IMR-90 (cell line): ENCODE measurements at regions of chr11 and their contacts with region 1.

Region 1: DNA sequence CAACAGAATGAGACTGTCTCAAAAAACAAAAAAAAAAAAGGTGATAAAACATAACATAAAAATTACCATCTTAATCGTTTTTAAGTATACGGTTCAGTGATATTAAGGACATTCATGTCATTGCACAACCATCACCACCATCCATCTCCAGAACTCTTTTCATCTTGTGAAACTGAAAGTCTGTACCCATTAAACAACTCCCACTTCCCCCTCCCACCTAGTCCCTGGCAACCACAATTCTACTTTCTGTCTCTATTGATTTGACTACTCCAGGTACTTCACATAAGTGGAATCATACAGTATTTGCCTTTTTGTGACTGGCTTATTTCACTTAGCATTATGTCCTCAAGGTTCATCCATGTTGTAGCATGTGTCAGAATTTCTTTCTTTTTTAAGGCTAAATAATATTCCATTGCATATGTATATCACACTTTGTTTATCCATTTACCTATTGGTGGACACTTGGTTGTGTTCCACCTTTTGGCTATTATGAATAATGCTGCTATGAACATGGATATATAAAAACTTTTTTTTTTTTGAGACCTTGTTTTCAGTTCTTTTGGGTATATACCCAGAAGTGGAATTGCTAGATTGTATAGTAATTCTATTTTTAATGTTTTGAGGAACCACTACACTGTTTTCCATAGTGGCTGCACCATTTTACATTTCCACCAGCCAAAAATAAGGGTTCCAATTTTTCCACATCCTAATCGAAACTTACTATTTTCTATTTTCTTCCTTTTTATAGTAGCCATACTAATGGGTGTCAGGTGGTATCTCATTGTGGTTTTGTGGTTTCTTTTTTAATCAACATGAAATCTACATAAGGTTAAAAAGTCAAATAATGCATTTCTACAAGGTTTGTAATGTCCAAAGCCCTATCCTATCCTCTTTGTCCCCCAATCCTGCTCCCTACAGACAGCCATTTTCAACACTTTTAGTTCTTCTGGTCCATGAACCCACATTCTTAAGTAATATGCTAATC is 23.4 kb upstream of the PIK3C2A start:
- DNase-seq: no peak
- ATAC-seq: no peak
- H3K4me3 ChIP-seq: no peak overlapping the region
- H3K27ac ChIP-seq: no peak overlapping the region
- H3K4me1 ChIP-seq: no peaks in the 10 kb centered on the region
- H3K27me3 ChIP-seq: no peaks in the 10 kb centered on the region
- CTCF ChIP-seq: no peak
- POLR2A ChIP-seq: no peak
- RAD21 ChIP-seq: no peak

Region 2: DNA sequence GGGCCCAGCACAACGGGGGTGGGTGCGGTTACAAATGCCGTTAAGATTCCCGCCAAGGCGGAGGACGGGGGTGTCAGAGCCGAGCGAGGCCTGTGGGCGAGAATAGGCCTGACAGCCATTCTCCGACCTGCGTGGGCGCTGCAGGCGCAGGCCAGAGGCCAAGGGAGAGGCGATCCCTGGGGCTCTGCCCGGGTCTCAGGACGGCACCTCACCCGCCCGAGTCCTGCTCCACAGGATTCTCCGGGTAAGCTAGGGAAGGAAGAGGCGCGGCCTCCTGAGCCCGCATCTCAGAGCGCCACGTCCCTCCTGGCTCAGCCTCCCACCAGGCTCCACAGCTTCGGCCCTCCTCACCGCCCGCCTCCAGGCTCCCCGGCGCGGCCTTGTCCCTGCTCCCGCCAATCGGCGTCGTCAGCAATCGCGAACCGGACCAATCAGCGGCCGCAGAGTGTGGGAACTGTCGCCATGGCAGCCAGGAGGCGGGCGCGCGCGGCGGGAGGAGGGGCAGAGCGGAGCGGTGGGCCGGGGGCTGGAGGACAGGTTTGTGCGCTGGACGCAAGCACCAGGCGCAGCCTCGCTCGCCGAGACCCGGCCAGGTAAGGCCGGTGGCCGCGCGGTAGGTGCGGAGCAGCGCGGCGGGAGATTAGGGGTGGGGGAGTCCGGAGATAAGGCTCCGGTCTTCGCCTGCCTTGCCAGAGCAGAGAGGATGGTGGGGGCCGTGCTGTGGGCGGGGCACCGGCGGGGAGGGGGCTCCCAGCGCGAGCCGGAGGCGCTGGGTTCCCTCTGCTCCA is 45.3 kb after region 1 on chr11 and contains the start of gene NUCB2:
- CTCF ChIA-PET with region 1: no interaction called
- POLR2A ChIA-PET with region 1: no interaction called
- dilution Hi-C with region 1: no loop called
- in situ Hi-C with region 1: no loop called
- intact Hi-C with region 1: loop called (anchors 1 kb)
- DNase-seq: peak; percentile 93
- ATAC-seq: peak; percentile 97
- H3K4me3 ChIP-seq: peak within 1 kb of the TSS; percentile 79
- H3K27ac ChIP-seq: peak within 1 kb of the TSS; percentile 77
- H3K4me1 ChIP-seq: peaks cover 2% of the 10 kb centered on the region; the same call in 1 of the 2 replicates
- H3K27me3 ChIP-seq: no peaks in the 10 kb centered on the region
- CTCF ChIP-seq: no peak
- POLR2A ChIP-seq: peak; percentile 72
- RAD21 ChIP-seq: 0 out of 2 replicates have a peak, but pooled peaks have one; percentile 5
- total RNA-seq, gene NUCB2: 52.7 and 83.0 TPM in 2 replicates

Region 3: DNA sequence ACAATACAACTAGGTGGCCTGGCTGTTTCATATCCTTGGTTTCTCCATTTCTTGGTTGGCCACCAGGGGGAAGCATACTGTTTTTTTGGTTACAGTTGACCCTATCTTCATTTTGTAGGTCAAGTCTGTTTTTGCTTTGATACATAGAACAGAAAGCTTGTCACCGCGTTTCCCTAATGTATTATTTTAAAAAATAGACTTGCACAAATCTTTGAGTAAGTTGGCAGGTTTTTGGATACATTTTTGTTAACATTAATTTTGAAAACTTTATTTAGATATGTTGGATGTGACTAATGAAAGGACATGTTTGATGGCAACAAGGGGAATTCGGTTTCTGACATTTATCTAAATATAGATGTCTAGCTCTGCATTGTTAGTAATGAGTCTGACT is 123.4 kb after region 1 on chr11:
- CTCF ChIA-PET with region 1: interaction called, 9 read pairs
- POLR2A ChIA-PET with region 1: no interaction called
- dilution Hi-C with region 1: no loop called
- in situ Hi-C with region 1: no loop called
- intact Hi-C with region 1: loop called (anchors 1 kb)
- DNase-seq: peak; percentile 79
- ATAC-seq: no peak; the same call in 1 of the 2 replicates
- H3K4me3 ChIP-seq: no peak overlapping the region
- H3K27ac ChIP-seq: no peak overlapping the region
- H3K4me1 ChIP-seq: peaks cover 2% of the 10 kb centered on the region
- H3K27me3 ChIP-seq: no peaks in the 10 kb centered on the region
- CTCF ChIP-seq: peak; percentile 72
- POLR2A ChIP-seq: no peak
- RAD21 ChIP-seq: peak; percentile 48

Region 4: DNA sequence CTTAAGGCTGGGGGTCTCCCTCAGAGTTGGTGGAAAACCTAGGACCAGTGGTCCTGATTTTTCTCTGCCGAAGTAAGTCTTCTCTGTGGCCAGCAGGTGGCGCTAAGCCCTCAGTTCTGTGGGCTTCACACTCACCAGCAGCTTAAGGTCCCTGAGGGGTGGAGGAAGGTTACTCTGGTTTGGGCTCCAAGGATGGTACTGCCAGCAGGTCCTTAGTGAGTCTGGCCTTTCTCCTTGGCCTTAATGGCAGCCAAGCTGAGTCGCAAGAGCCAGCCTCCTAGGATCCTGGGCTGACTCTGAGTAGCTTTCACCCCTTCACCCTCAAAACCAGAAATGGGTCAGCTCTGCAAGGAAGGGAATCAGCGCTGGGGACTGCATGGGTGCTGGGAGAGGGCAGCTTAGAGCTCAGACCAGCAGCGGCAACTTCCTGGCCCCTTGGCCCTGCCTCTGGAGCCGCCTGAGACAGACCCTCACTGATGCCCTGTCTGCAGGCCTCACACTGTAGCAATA is 152.9 kb after region 1 on chr11:
- CTCF ChIA-PET with region 1: interaction called, 3 read pairs
- POLR2A ChIA-PET with region 1: no interaction called
- dilution Hi-C with region 1: no loop called
- in situ Hi-C with region 1: no loop called
- intact Hi-C with region 1: loop called (anchors 1 kb)
- DNase-seq: peak; percentile 79
- ATAC-seq: peak; percentile 77
- H3K4me3 ChIP-seq: no peak overlapping the region
- H3K27ac ChIP-seq: no peak overlapping the region
- H3K4me1 ChIP-seq: peaks cover 11% of the 10 kb centered on the region
- H3K27me3 ChIP-seq: peaks cover 3% of the 10 kb centered on the region; the same call in 1 of the 2 replicates
- CTCF ChIP-seq: peak; percentile 80
- POLR2A ChIP-seq: no peak
- RAD21 ChIP-seq: peak; percentile 72

Region 5: GRCh38 chr11:17528181-17528691 is 297.1 kb after region 1 on chr11:
- CTCF ChIA-PET with region 1: interaction called, 4 read pairs
- POLR2A ChIA-PET with region 1: no interaction called
- dilution Hi-C with region 1: no loop called
- in situ Hi-C with region 1: no loop called
- intact Hi-C with region 1: loop called (anchors 1 kb)
- DNase-seq: peak; percentile 28
- ATAC-seq: peak; percentile 98
- H3K4me3 ChIP-seq: no peak overlapping the region
- H3K27ac ChIP-seq: no peak overlapping the region
- H3K4me1 ChIP-seq: no peaks in the 10 kb centered on the region
- H3K27me3 ChIP-seq: peaks cover 13% of the 10 kb centered on the region; the same call in 1 of the 2 replicates
- CTCF ChIP-seq: peak; percentile 67
- POLR2A ChIP-seq: no peak
- RAD21 ChIP-seq: peak; percentile 69